GM13976 (cell line): ENCODE measurements at regions of chr10 and their contacts with region 1.

Region 1: GRCh38 chr10:93074147-93074596 is 479 bp downstream of the CYP26A1 start:
- DNase-seq: peak; percentile 42
- CTCF ChIP-seq: no peak

Region 2: DNA sequence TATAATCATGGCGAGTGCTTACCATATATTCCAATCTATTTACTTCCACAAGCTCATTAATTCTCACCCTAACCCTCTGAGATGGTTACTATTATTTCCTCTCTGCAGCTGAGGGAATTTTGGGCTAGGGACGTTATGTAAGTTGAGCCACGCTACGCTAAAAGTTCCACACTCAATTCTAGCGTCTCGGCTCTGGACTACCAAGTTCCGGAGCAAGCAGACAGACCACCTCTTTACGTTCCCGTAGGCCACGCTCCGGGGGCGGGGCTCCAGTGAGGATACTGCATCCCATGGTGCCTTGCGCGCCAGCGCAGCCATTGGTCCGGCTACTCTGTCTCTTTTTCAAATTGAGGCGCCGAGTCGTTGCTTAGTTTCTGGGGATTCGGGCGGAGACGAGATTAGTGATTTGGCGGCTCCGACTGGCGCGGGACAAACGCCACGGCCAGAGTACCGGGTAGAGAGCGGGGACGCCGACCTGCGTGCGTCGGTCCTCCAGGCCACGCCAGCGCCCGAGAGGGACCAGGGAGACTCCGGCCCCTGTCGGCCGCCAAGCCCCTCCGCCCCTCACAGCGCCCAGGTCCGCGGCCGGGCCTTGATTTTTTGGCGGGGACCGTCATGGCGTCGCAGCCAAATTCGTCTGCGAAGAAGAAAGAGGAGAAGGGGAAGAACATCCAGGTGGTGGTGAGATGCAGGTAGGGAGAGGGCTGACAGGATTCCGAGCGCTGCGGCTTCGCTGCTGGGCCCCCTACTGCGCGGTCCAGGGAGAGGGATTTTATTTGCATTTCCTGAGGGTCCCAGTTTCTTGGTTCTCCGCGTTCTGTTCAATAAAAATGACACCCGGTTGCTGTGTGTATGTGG is 481.2 kb before region 1 on chr10 and contains the start of gene KIF11:
- in situ Hi-C with region 1: no loop called
- DNase-seq: peak; percentile 93
- CTCF ChIP-seq: no peak

Region 3: DNA sequence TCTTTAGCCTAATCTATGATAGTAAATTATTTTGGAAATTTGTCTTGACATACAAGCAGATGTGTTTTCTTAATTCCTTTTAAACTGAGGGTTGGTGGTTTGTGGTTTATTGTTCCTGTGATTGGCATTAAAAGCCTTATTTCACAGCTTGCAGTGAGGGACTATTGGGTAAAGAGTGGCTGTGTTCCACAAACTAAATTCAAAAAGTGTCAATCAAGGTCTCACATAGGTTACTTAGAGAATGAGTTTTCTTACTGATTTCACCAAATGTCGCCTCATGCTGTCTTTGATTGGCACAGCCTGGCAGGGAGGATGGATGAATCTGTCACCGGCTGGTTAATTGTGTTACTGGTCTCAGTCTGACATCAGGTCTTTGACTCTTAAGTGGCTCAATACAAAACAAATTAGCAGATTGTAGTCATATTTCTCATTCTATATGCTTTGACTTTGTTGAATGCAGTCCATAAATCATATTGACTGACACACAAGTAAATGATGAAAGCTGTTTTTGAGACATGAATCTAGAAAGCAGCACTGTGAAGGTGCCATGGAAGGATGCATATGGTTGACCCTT is 80.4 kb before region 1 on chr10:
- in situ Hi-C with region 1: no loop called
- DNase-seq: no peak
- CTCF ChIP-seq: no peak

Region 4: DNA sequence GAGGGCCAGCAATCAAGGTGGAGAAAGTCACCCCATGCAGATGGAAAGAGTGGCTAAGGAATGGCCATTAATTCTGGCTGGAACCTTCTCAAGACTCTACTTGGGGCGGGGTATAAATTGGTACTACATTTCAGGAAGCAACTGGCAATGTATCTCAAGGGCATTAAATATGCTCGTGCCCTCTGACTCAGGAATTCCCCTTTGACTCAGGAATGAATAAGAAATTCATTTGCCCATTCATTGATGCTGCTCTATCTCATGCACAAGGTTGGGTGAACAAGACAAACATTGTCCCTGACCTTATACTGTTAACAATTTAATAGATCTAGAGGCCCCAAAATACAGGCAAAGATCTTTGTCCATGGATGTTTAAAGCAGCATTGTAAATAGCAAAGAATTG is 219.8 kb after region 1 on chr10:
- in situ Hi-C with region 1: loop called (anchors 10 kb)
- DNase-seq: no peak
- CTCF ChIP-seq: no peak

Region 5: GRCh38 chr10:93352638-93353383 is 278.6 kb after region 1 on chr10:
- in situ Hi-C with region 1: loop called (anchors 10 kb)
- DNase-seq: peak; percentile 53
- CTCF ChIP-seq: no peak